AG04450 (cell line): ENCODE measurements at regions of chr20 and their contacts with region 1.

Region 1: GRCh38 chr20:24992487-24993205 is at the start of gene APMAP:
- DNase-seq: peak; percentile 61
- H3K4me3 ChIP-seq: peak within 1 kb of the TSS; percentile 95
- H3K27ac ChIP-seq: peak within 1 kb of the TSS; percentile 88
- H3K27me3 ChIP-seq: peaks cover 5% of the 10 kb centered on the region
- CTCF ChIP-seq: no peak
- polyA plus RNA-seq, gene APMAP: 94.5 and 97.4 TPM in 2 replicates

Region 2: GRCh38 chr20:24917797-24918578 is 74.7 kb before region 1 on chr20:
- CTCF ChIA-PET with region 1: no interaction called
- POLR2A ChIA-PET with region 1: no interaction called
- DNase-seq: peak; percentile 33
- H3K4me3 ChIP-seq: 0 out of 2 replicates have a peak overlapping the region, but pooled peaks have one; percentile 7
- H3K27ac ChIP-seq: no peak overlapping the region
- H3K27me3 ChIP-seq: no peaks in the 10 kb centered on the region
- CTCF ChIP-seq: peak; percentile 86

Region 3: GRCh38 chr20:24970754-24971153 is 21.9 kb before region 1 on chr20:
- CTCF ChIA-PET with region 1: no interaction called
- POLR2A ChIA-PET with region 1: no interaction called
- DNase-seq: no peak
- H3K4me3 ChIP-seq: no peak overlapping the region
- H3K27ac ChIP-seq: no peak overlapping the region
- H3K27me3 ChIP-seq: no peaks in the 10 kb centered on the region
- CTCF ChIP-seq: no peak

Region 4: GRCh38 chr20:25065625-25066338 is 73.1 kb after region 1 on chr20:
- CTCF ChIA-PET with region 1: interaction called, 147 read pairs
- POLR2A ChIA-PET with region 1: no interaction called
- DNase-seq: no peak
- H3K4me3 ChIP-seq: no peak overlapping the region
- H3K27ac ChIP-seq: no peak overlapping the region
- H3K27me3 ChIP-seq: peaks cover 52% of the 10 kb centered on the region
- CTCF ChIP-seq: peak; percentile 80

Region 5: DNA sequence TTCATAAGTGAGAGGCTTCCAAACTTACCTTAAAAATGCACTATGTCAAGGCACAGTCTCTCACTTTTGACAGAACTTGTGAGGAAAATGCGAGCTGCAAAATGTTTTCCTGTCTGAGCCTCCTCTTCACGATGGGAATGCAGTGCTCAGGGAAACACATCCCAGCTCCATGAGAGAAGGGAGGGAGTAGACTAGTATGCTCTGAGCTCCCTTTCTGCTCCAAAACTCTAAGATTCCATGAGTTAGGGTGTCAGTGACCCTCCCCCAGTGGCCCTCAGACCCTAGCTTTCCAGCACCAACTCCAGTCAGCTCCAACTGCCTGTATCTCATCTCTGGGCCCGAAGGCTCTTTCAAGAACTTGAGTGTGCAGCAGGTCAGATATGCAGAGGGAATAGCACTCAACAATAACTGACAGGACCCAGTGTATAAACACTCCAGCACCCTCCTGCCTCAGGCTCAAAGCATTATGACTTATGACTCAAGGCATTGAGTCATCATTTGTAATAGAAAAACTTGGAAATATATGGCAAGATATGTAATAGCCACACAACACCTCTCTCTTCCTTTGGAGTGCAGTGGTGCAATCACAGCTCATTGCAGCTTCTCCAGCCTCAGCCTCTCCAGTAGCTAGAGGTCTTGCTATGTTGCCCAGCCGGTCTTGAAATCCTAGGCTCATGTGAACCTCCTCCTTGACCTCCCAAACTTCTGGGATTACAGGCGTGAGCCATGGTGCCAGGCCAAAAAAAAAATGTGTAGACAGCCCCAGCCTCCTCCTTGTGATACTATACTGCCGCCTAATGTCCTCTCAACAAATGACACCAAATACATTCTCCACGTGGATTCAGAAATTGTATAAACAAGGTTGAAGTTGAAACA is 186.2 kb after region 1 on chr20:
- CTCF ChIA-PET with region 1: interaction called, 35 read pairs
- POLR2A ChIA-PET with region 1: no interaction called
- DNase-seq: peak; percentile 38
- H3K4me3 ChIP-seq: no peak overlapping the region
- H3K27ac ChIP-seq: peak overlapping the region; percentile 58
- H3K27me3 ChIP-seq: peaks cover 12% of the 10 kb centered on the region
- CTCF ChIP-seq: peak; percentile 82

Region 6: GRCh38 chr20:25247956-25248785 is 255.5 kb after region 1 on chr20 and contains the start of gene PYGB:
- CTCF ChIA-PET with region 1: interaction called, 17 read pairs
- POLR2A ChIA-PET with region 1: no interaction called
- DNase-seq: peak; percentile 56
- H3K4me3 ChIP-seq: peak within 1 kb of the TSS; percentile 89
- H3K27ac ChIP-seq: peak within 1 kb of the TSS; percentile 87
- H3K27me3 ChIP-seq: no peaks in the 10 kb centered on the region
- CTCF ChIP-seq: no peak
- polyA plus RNA-seq, gene PYGB: 43.2 and 60.0 TPM in 2 replicates

Region 7: GRCh38 chr20:25294459-25295385 is 302.1 kb after region 1 on chr20:
- CTCF ChIA-PET with region 1: interaction called, 13 read pairs
- POLR2A ChIA-PET with region 1: no interaction called
- DNase-seq: no peak
- H3K4me3 ChIP-seq: no peak overlapping the region
- H3K27ac ChIP-seq: peak overlapping the region; percentile 39
- H3K27me3 ChIP-seq: no peaks in the 10 kb centered on the region
- CTCF ChIP-seq: peak; percentile 99